Endothelial cell of umbilical vein (primary cell): ENCODE measurements at regions of chr2 and their contacts with region 1.

Region 1: DNA sequence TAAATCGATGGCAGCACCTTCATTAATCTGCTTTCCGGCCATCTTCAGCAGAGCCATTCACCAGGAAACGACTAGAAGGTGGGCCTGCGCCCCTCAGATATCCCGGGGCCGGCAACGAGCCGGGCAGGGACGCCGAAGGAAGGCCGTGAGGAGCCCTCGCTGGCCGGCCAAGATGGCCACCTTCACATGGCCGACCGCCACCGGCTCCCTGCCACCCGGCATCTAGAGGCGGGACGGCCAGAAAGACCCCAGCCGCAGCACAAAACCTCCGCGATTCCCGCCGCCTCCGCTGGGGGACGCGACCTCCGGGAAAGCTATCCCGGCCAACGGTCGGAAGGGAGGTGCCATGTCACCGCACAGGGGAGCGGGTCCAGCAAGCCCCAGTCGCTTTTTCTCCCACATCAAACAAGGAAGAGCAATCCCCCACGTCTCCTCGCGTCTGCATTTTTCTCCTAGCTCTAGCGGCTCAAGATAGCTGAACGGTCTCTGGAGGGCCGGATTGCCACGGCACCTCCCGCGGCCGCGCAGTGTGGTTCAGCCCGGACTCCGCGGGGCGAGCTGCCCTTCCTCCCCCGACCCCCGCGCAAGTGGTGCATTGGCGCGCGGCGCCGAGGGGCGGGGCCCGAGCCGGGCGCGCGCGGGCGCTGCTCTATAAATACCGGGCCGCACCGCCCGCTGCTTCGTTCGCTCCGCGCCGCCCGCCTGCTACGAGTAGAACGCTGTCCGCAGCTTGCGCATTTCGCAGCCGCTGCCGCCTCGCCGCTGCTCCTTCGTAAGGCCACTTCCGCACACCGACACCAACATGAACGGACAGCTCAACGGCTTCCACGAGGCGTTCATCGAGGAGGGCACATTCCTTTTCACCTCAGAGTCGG is at the start of gene MAT2A:
- DNase-seq: peak; percentile 93
- H3K4me3 ChIP-seq: peak within 1 kb of the TSS; percentile 84 to 96 (median 84)
- H3K27ac ChIP-seq: peak within 1 kb of the TSS; percentile 94
- H3K4me1 ChIP-seq: peaks cover 42% of the 10 kb centered on the region
- H3K27me3 ChIP-seq: no peaks in the 10 kb centered on the region
- CTCF ChIP-seq: peak; percentile 74 to 86
- POLR2A ChIP-seq: peak; percentile 100
- total RNA-seq, gene MAT2A: 236 and 257 TPM in 2 replicates

Region 2: GRCh38 chr2:85327822-85328617 is 210.7 kb before region 1 on chr2 and contains the start of gene TGOLN2:
- CTCF ChIA-PET with region 1: no interaction called
- POLR2A ChIA-PET with region 1: interaction called, 7 read pairs
- dilution Hi-C with region 1: no loop called
- intact Hi-C with region 1: loop called (anchors 5 kb)
- DNase-seq: peak; percentile 91
- H3K4me3 ChIP-seq: peak within 1 kb of the TSS; percentile 80 to 94 (median 82)
- H3K27ac ChIP-seq: peak within 1 kb of the TSS; percentile 86
- H3K4me1 ChIP-seq: peaks cover 29% of the 10 kb centered on the region
- H3K27me3 ChIP-seq: no peaks in the 10 kb centered on the region
- CTCF ChIP-seq: no peak
- POLR2A ChIP-seq: peak; percentile 99
- total RNA-seq, gene TGOLN2: 119 and 140 TPM in 2 replicates

Region 3: DNA sequence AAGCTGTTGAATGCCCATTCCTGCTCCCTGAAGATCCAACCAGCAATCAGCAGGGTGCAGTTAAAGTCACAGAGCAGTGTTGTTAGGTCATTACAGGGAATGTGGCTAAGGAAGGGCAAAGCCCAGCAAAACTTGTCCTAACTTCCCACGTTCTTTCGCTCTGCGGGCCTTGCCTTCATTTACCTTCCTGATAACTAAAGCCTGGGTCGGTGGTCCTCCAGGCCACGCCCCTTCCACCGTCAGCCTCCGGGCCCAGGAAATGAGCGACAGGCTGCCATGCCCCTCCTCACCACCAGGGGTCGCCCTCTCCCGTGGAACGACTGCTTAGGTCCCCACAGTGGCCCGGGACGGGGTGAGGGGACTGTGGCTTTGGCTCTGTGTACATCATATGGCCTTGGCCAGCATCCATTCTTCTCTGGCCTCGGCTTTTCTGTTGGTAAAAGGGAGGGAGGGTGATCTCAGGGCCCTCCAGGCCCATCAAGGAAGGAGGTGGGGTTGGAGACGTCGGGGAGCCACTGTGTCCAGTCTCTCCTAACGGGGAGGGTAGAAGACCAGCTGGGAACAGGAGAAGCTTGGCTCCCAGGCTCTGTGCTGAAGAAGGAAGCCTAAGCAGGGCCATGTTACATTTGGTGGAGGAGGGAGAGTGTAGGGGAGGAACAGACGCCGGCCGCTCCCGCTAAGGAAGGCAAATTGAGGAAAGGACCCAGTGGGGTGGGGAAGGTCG is 118.0 kb before region 1 on chr2:
- CTCF ChIA-PET with region 1: interaction called, 63 read pairs
- POLR2A ChIA-PET with region 1: interaction called, 41 read pairs
- dilution Hi-C with region 1: no loop called
- intact Hi-C with region 1: loop called (anchors 1 kb)
- DNase-seq: peak; percentile 79
- H3K4me3 ChIP-seq: no peak overlapping the region
- H3K27ac ChIP-seq: peak overlapping the region; percentile 16
- H3K4me1 ChIP-seq: peaks cover 9% of the 10 kb centered on the region
- H3K27me3 ChIP-seq: no peaks in the 10 kb centered on the region
- CTCF ChIP-seq: peak; percentile 99
- POLR2A ChIP-seq: no peak

Region 4: GRCh38 chr2:85437488-85438284 is 101.0 kb before region 1 on chr2:
- CTCF ChIA-PET with region 1: interaction called, 14 read pairs
- POLR2A ChIA-PET with region 1: interaction called, 26 read pairs
- dilution Hi-C with region 1: no loop called
- intact Hi-C with region 1: loop called (anchors 1 kb)
- DNase-seq: peak; percentile 82
- H3K4me3 ChIP-seq: peak overlapping the region in 1 of 3 experiments; percentile 30
- H3K27ac ChIP-seq: peak overlapping the region; percentile 60
- H3K4me1 ChIP-seq: peaks cover 17% of the 10 kb centered on the region
- H3K27me3 ChIP-seq: no peaks in the 10 kb centered on the region
- CTCF ChIP-seq: no peak
- POLR2A ChIP-seq: peak; percentile 73

Region 5: GRCh38 chr2:85468704-85469349 is 69.9 kb before region 1 on chr2:
- CTCF ChIA-PET with region 1: interaction called, 6 read pairs
- POLR2A ChIA-PET with region 1: interaction called, 11 read pairs
- dilution Hi-C with region 1: no loop called
- intact Hi-C with region 1: no loop called
- DNase-seq: peak; percentile 60
- H3K4me3 ChIP-seq: no peak overlapping the region
- H3K27ac ChIP-seq: no peak overlapping the region
- H3K4me1 ChIP-seq: no peaks in the 10 kb centered on the region
- H3K27me3 ChIP-seq: no peaks in the 10 kb centered on the region
- CTCF ChIP-seq: no peak
- POLR2A ChIP-seq: no peak

Region 6: DNA sequence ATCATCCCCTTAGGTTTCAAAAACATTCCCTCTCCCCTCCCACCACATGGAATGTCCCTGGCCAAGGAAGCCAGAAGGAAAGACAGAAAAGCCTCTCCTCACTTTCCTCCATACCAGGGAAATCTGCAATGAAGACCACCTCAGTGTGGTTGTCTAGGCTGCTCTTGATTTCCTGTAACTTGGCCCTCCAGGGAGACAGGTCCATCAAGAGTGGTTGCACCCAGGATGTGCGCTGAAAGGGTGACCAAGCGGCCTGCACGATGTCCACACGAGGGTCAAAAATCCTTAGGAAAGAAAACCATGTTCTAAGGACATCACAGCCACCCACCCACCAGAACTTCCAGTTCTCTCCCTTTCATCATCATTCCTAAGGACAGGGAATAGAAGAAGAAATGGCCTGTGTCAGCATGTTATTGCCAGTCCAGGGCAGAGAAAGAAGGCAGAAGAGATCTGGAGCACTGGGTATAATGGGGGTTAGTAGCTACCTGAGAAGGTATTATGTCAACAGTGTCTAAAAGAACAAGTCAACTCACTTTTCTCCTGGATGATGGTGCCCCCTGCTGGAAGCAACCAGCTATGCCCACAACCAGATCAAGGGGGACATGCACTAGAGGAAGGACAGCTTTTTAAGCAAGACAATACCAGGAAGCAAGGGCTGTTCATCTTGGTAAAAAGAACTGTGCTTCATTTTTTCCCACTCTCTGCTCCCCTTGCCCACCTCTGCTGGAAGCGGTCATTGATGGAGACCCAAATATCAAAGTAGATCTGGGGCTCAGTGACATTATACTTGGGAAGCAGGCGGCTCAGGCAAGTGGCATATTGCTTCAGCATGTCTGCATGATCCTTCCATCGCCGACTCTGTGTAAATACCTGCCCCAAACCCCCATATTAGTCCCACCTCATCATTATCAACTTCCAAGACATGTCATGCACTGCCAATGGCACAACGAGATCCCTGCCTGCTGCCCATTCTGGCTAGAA is 13.3 kb after region 1 on chr2:
- CTCF ChIA-PET with region 1: interaction called, 33 read pairs
- POLR2A ChIA-PET with region 1: interaction called, 73 read pairs
- dilution Hi-C with region 1: no loop called
- intact Hi-C with region 1: no loop called
- DNase-seq: peak; percentile 86
- H3K4me3 ChIP-seq: no peak overlapping the region
- H3K27ac ChIP-seq: no peak overlapping the region
- H3K4me1 ChIP-seq: peaks cover 17% of the 10 kb centered on the region
- H3K27me3 ChIP-seq: no peaks in the 10 kb centered on the region
- CTCF ChIP-seq: peak; percentile 82 to 94
- POLR2A ChIP-seq: no peak

Region 7: DNA sequence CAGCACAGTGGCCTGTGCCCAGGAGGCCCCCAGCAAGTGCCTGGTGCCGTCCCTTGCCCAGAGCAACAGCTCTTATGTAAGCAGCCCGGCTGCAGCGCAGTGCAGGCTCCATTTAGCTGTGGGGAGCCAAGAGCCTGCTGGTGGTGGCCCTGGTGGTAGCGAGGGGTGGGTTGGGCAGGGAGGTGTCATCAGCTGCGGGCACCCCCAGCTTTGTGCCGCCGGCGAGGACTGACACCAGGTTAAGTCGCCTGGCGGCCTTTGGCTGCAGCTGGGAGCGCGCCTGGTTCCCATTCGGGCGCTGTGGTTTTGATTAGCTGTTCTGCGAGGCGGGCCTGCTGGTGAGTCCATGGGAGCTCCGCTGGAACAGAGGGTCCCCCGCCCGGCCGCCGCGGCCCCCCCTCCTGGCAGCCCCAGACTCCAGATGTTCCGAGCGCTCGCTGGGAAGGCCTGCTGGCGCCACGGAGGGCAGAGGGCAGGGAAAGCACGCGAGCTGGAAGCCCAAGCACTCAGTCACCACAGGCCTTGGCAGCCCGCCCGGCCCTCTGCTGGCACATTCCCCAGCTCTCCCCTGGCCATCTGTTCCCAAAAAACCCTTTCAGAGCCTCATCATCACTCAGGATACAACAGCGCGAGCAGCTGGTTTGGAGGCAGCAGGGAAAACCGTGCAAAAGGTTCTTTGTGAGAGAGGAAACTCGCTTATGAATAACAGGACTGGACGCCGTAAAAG is 233.5 kb after region 1 on chr2:
- CTCF ChIA-PET with region 1: no interaction called
- POLR2A ChIA-PET with region 1: no interaction called
- dilution Hi-C with region 1: no loop called
- intact Hi-C with region 1: loop called (anchors 1 kb)
- DNase-seq: peak; percentile 100
- H3K4me3 ChIP-seq: no peak overlapping the region
- H3K27ac ChIP-seq: peak overlapping the region; percentile 100
- H3K4me1 ChIP-seq: peaks cover 38% of the 10 kb centered on the region
- H3K27me3 ChIP-seq: no peaks in the 10 kb centered on the region
- CTCF ChIP-seq: peak; percentile 32 to 42
- POLR2A ChIP-seq: peak; percentile 55